ENCODE measurements at regions of chr3 and their contacts with region 1.

Region 1: DNA sequence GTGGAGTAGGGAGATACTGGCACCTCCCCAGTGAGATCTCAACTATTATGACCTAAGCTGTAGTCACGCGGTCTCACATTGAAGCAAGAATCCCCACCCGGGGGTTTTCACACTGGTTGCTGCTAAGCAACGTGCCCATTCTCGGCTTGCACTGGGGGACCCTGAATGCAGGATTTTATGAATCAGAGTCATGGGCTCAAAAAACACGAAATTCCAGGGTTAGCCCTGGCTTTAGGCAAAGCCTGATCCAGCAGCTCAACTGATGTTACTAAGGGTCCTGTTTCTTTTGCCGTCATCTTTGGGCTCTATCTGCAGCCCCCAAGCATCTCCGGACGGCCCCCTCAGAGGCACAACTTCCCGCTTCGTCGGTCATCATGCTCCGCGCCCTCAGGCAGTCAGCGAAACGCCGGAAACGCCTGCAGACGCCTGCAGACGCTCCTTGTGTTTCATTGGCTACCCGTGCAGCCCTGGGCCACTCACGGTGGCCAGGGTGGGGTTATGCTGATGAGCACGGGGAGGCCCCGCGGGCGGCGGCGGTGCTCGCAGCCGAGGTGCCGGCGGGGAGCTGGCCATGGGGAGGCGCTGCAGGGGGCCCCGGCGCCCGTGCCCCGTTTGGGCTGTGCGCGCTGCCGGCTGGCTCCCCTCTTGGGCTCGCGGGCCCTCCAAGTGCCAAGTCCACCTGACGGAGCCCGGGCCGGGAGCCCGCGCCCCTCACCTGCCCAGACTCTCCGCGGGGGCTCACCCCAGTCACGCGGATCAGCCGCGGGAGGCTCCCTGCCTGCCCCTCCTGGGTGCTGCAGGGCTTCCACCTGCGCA is 25.8 kb downstream of the EFCC1 start:
- DNase-seq: peak; percentile 90 to 91
- ATAC-seq: peak; percentile 86 to 95 (median 90)
- H3K4me3 ChIP-seq: peak overlapping the region; percentile 27 to 65 (median 55)
- H3K27ac ChIP-seq: peak overlapping the region in 9 of 10 donors; percentile 55 to 93 (median 75)
- H3K4me1 ChIP-seq: peaks cover 9 to 57% (median 31%) of the 10 kb centered on the region in 9 donors
- H3K27me3 ChIP-seq: no peaks in the 10 kb centered on the region
- CTCF ChIP-seq: peak; percentile 54 to 90 (median 79)

Region 2: GRCh38 chr3:128763967-128764366 is 263.0 kb before region 1 on chr3:
- intact Hi-C with region 1: no loop called
- DNase-seq: peak in 1 of 2 donors; percentile 40
- ATAC-seq: peak; percentile 53 to 86 (median 70)
- H3K4me3 ChIP-seq: no peak overlapping the region
- H3K27ac ChIP-seq: peak overlapping the region in 6 of 10 donors; percentile 14 to 59 (median 40)
- H3K4me1 ChIP-seq: peaks cover 8 to 99% (median 77%) of the 10 kb centered on the region in 9 donors
- H3K27me3 ChIP-seq: no peaks in the 10 kb centered on the region
- CTCF ChIP-seq: no peak

Region 3: GRCh38 chr3:128993461-128994173 is 33.3 kb before region 1 on chr3 and contains the start of gene CFAP92:
- intact Hi-C with region 1: loop called in 2 of 10 experiments (anchors 5 to 10 kb)
- DNase-seq: peak; percentile 88 to 89
- ATAC-seq: peak; percentile 94 to 99 (median 98)
- H3K4me3 ChIP-seq: peak within 1 kb of the TSS in 9 of 10 donors; percentile 17 to 59 (median 52)
- H3K27ac ChIP-seq: peak within 1 kb of the TSS in 1 of 10 donors; percentile 73
- H3K4me1 ChIP-seq: peaks cover 0 to 20% (median 13%) of the 10 kb centered on the region in 9 donors
- H3K27me3 ChIP-seq: peaks cover 0 to 8% (median 0%) of the 10 kb centered on the region in 7 donors
- CTCF ChIP-seq: no peak
- total RNA-seq, gene CFAP92: 0.12 to 1.2 (median 0.41) TPM

Region 4: GRCh38 chr3:129003578-129004160 is 23.3 kb before region 1 on chr3:
- intact Hi-C with region 1: loop called in 1 of 10 experiments (anchors 2 kb)
- DNase-seq: peak in 1 of 2 donors; percentile 36
- ATAC-seq: peak in 1 of 8 donors; percentile 16
- H3K4me3 ChIP-seq: peak overlapping the region in 9 of 10 donors; percentile 12 to 85 (median 77)
- H3K27ac ChIP-seq: peak overlapping the region in 2 of 10 donors; percentile 30 to 85
- H3K4me1 ChIP-seq: peaks cover 3 to 85% (median 57%) of the 10 kb centered on the region in 9 donors
- H3K27me3 ChIP-seq: peaks cover 0 to 64% (median 32%) of the 10 kb centered on the region in 7 donors
- CTCF ChIP-seq: peak in 4 of 9 donors; percentile 2 to 42 (median 15)